Esophagus muscularis mucosa (tissue), 4 donors: ENCODE measurements at regions of chr1 and their contacts with region 1.

Region 1: GRCh38 chr1:222455188-222455879 is 92.6 kb downstream of the HHIPL2 start:
- DNase-seq: peak; percentile 95
- H3K4me3 ChIP-seq: peak overlapping the region in 3 of 4 donors; percentile 16 to 41 (median 21)
- H3K27ac ChIP-seq: peak overlapping the region in 3 of 4 donors; percentile 36 to 61 (median 40)
- H3K4me1 ChIP-seq: peaks cover 10 to 20% (median 18%) of the 10 kb centered on the region in 4 donors
- H3K27me3 ChIP-seq: no peaks in the 10 kb centered on the region
- CTCF ChIP-seq: peak; percentile 89 to 95 (median 92)
- EP300 ChIP-seq: no peak
- POLR2A ChIP-seq: no peak

Region 2: DNA sequence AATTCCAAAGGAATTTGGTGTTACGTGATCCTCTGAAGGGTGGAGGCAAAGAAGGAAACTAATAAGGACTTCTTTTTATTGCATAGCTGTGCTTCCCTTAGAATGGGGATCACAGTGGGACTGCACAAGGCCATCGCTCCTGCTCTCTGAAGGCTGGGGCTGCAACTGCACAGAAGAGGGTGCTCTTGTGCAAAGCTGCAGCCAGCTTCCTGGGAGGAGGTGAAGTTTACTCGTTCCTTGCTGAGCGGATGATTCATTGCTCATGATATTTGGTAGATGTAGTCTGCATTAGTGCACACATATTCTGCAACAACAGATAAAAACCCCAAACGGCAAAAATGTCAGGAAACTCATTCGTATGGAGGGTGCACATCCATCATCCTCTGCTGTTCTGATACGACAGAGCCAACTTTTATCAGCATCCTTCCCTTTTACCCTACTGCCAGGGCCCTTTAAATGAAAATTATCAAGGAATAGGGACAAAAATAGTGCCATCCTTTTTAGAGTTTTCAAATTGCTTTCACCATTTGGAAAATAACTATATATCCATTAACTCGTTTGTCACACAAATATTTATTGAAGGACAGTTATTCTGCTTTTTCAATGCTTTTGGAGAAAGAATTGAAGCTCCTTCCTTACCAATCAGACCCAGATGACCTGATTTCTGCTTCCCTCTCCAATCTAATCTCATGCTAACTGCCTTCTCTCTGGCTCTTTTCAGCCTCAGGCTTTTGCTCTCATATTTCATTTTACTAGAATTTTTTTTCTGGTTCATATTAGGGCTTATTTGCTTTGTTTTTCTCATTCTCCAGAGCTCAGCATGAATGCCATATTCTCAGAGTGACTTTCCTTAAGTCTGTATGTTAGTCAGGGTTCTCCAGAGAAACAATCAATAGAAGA is 977.0 kb before region 1 on chr1:
- intact Hi-C with region 1: loop called (anchors 2 kb)
- DNase-seq: no peak
- H3K4me3 ChIP-seq: no peak overlapping the region
- H3K27ac ChIP-seq: no peak overlapping the region
- H3K4me1 ChIP-seq: peaks cover 0 to 8% (median 5%) of the 10 kb centered on the region in 4 donors
- H3K27me3 ChIP-seq: no peaks in the 10 kb centered on the region
- CTCF ChIP-seq: peak; percentile 66 to 78 (median 73)
- EP300 ChIP-seq: no peak
- POLR2A ChIP-seq: no peak

Region 3: GRCh38 chr1:221543529-221544120 is 911.7 kb before region 1 on chr1:
- intact Hi-C with region 1: loop called (anchors 10 kb)
- DNase-seq: no peak
- H3K4me3 ChIP-seq: no peak overlapping the region
- H3K27ac ChIP-seq: no peak overlapping the region
- H3K4me1 ChIP-seq: peaks cover 0 to 18% (median 13%) of the 10 kb centered on the region in 4 donors
- H3K27me3 ChIP-seq: no peaks in the 10 kb centered on the region
- CTCF ChIP-seq: peak; percentile 50 to 65 (median 58)
- EP300 ChIP-seq: no peak
- POLR2A ChIP-seq: no peak

Region 4: DNA sequence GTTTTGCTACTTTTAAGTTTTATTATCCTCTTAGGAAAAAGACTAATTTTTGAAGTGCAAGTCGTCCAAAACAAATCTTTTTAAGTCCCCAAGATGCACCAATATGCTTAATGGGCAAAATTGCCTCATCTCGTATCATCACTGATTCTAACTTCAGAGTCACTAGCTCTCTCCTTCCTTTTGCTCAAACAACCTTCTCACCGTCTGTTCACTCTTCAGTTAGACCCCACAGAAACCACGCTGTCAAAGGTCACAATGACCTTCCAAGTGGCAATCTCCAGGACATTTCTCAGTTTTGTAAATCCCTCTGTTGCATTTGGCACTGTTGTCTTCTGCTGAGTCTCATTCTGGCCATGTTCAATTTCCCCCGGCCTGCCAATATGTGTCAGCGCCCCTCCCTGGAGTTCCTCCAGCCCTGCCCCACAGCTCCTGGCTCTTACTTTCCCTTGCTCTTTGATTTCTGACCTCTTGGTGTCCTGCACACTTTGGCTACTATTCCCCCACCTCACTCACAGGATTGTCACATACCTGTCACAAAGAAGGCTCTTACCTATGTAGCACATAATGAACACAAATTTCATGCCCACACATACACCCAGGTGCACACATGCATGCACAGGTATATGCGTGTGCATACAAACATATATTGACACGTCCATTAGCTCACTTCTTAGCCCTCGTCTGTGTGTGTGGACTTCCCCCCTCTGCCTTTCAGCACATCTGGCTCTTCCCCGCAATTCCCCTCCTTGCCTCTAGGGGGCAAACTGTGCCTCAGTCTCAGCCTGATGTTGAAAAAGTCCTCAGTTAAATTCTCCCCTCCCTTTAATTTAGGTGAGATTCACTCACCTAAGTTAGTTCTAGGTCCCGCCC is 359.5 kb before region 1 on chr1:
- intact Hi-C with region 1: loop called (anchors 10 kb)
- DNase-seq: peak; percentile 93
- H3K4me3 ChIP-seq: no peak overlapping the region
- H3K27ac ChIP-seq: no peak overlapping the region
- H3K4me1 ChIP-seq: no peaks in the 10 kb centered on the region
- H3K27me3 ChIP-seq: no peaks in the 10 kb centered on the region
- CTCF ChIP-seq: peak; percentile 48 to 76 (median 60)
- EP300 ChIP-seq: no peak
- POLR2A ChIP-seq: no peak